A549 (cell line): ENCODE measurements at regions of chr2 and their contacts with region 1.

Region 1: DNA sequence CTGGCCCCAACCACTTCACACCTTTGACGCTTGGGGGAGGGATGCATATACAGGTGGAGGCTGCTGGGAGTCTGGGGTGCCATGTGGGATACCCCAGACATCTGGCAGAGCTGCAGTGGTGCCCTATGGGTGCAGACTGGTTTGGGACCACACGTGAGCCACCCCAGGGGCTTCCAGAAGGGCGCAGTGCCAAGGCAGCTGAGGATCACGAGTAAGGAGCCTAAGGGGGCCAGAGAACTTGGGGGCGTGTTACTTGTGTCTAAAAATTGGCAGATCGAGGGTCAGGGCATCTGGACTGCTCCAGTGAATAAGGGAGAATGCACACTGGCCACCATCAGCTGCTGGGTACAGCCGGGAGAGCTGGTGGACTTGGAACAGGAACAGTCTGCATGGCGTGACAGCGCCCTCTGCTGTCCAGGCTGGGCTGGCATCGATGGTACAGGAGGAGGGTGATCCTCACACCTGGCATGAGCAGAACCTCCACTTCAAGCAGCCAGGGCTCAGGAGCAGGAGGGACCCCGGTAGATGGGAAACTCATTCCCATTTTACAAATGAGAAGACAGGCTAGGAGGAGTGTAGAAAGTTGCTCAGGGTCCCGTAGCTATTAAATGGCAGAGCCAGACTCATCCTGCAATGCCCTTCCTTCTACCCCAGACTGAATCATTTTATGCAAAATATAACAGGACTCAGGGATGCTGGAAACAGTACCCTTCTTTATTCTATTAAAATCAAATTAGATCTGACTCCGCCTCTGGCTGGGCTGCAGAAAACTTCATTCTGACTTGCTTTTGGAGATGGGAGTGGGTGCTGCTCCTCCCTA is 60.4 kb downstream of the ATOH8 start:
- DNase-seq: peak; percentile 91 to 93
- ATAC-seq: peak; percentile 97 to 99
- H3K4me3 ChIP-seq: no peak overlapping the region
- H3K27ac ChIP-seq: peak overlapping the region; percentile 52 to 71
- H3K4me1 ChIP-seq: peaks cover 24% of the 10 kb centered on the region
- CTCF ChIP-seq: peak; percentile 98
- EP300 ChIP-seq: no peak
- POLR2A ChIP-seq: no peak
- RAD21 ChIP-seq: peak; percentile 100

Region 2: GRCh38 chr2:85468704-85469349 is 345.4 kb before region 1 on chr2:
- CTCF ChIA-PET with region 1: no interaction called
- POLR2A ChIA-PET with region 1: no interaction called
- DNase-seq: peak; percentile 69 to 82
- ATAC-seq: peak; percentile 82 to 83
- H3K4me3 ChIP-seq: no peak overlapping the region
- H3K27ac ChIP-seq: peak overlapping the region; percentile 81 to 86
- H3K4me1 ChIP-seq: peaks cover 66% of the 10 kb centered on the region
- CTCF ChIP-seq: no peak
- EP300 ChIP-seq: no peak
- POLR2A ChIP-seq: no peak
- RAD21 ChIP-seq: peak in 1 of 2 experiments; percentile 8; a peak in 2 of 5 replicates

Region 3: GRCh38 chr2:85635636-85636035 is 178.6 kb before region 1 on chr2:
- CTCF ChIA-PET with region 1: interaction called, 60 read pairs
- POLR2A ChIA-PET with region 1: no interaction called
- DNase-seq: no peak
- ATAC-seq: no peak
- H3K4me3 ChIP-seq: no peak overlapping the region
- H3K27ac ChIP-seq: no peak overlapping the region
- H3K4me1 ChIP-seq: peaks cover 3% of the 10 kb centered on the region; the same call in 1 of the 3 replicates
- CTCF ChIP-seq: no peak
- EP300 ChIP-seq: no peak
- POLR2A ChIP-seq: no peak
- RAD21 ChIP-seq: no peak

Region 4: DNA sequence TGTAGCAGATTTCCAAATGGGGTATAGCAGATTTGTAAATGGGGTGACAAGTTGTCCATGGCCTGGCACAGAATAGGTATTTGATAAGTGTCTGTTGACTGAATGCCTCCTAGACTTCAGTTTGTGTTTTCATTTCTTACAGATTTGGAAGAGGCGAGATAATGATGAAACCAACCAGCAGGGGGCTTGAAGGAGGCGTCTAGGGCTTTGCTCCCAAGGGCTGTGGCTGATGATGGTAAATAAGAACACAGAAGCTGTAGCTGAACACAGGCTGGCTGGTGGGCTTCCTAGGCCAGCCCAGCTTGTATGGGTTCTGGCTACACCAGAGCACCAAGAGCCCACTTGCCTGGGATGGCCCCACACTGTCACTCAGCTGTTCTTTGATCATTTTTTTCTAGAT is 165.6 kb before region 1 on chr2:
- CTCF ChIA-PET with region 1: interaction called, 54 read pairs
- POLR2A ChIA-PET with region 1: no interaction called
- DNase-seq: peak; percentile 72 to 76
- ATAC-seq: peak; percentile 72 to 84
- H3K4me3 ChIP-seq: no peak overlapping the region
- H3K27ac ChIP-seq: peak overlapping the region; percentile 80 to 91
- H3K4me1 ChIP-seq: peaks cover 59% of the 10 kb centered on the region
- CTCF ChIP-seq: peak; percentile 71
- EP300 ChIP-seq: no peak
- POLR2A ChIP-seq: no peak
- RAD21 ChIP-seq: peak; percentile 63 to 67

Region 5: DNA sequence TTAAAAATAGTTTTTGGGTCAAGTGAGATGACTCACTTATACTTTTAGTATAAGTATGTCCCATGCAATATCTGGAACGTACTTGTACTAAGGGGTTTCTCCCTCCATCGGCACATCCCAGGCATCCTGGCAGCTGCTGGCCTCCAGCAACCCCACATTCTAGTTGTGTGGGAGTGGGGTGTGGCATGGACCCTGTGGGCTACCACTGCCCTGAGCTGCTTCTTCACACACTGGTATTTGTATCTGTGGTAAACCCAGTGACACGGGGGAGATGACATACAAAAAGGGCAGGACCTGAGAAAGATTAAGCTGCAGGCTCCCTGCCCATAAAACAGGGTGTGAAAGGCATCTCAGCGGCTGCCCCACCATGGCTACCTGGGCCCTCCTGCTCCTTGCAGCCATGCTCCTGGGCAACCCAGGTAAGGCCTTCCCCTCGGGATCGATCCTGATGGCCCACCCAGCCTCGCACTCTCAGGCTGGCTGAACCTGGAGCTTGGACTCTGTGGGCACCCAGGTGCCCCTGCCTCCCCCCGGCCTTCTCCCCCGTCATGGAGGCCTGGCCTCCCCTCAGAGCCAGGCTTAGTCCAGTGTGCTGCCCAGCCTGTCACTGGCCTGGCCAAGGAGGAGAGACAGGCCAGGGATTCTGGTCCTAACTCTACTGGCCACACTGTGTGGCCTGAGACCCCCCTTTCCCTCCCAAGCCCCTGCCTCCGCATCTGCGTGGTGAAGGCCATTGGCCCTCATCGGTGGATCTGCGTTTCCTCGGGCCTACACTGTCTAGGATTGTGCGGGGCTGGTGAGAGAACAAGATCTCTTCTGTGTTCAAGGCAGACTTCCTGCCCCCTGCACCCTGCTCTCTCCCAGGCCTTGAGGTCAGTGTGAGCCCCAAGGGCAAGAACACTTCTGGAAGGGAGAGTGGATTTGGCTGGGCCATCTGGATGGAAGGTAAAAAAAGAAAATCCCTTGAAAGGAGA is 119.9 kb before region 1 on chr2 and contains the start of gene GNLY:
- CTCF ChIA-PET with region 1: interaction called, 18 read pairs
- POLR2A ChIA-PET with region 1: no interaction called
- DNase-seq: no peak
- ATAC-seq: no peak; a peak in 1 of 6 replicates
- H3K4me3 ChIP-seq: no peak within 1 kb of the TSS
- H3K27ac ChIP-seq: peak within 1 kb of the TSS in 1 of 2 experiments; percentile 47; a peak in 3 of 6 replicates
- H3K4me1 ChIP-seq: peaks cover 7% of the 10 kb centered on the region; the same call in 1 of the 3 replicates
- CTCF ChIP-seq: no peak
- EP300 ChIP-seq: no peak
- POLR2A ChIP-seq: no peak
- RAD21 ChIP-seq: no peak
- polyA plus RNA-seq, gene GNLY: not detected in 2 replicates

Region 6: DNA sequence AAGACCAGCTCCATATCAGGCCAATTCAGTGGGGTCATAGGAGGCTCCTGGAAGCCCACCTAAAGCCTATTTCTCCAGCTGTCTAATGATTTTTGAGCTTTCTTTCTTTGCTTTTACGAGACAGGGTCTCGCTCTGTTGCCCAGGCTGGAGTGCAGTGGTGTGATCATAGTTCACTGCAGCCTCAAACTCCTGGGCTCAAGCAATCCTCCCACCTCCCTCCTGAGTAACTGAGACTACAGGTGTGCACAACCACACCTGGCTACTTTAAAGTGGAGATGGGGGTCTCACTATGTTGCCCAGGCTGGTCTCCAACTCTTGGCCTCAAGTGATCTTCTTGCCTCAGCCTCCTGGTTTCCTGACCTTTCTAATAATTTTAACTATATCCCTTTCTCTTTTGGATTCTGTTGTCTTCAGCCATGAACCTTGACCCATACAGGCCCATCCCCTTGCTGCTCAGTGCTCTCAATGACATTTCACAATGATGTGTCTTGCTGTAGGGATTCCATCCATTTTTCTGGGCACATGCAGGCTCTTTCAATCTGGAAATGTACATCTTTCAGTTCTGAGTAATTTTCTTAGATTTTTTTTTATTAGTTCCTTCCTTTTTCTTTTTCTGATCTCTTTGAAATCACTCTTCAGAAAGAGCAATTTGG is 90.4 kb before region 1 on chr2:
- CTCF ChIA-PET with region 1: interaction called, 394 read pairs
- POLR2A ChIA-PET with region 1: no interaction called
- DNase-seq: no peak
- ATAC-seq: no peak
- H3K4me3 ChIP-seq: no peak overlapping the region
- H3K27ac ChIP-seq: no peak overlapping the region; a peak in 1 of 6 replicates
- H3K4me1 ChIP-seq: peaks cover 12% of the 10 kb centered on the region
- CTCF ChIP-seq: no peak
- EP300 ChIP-seq: no peak
- POLR2A ChIP-seq: no peak
- RAD21 ChIP-seq: no peak

Region 7: DNA sequence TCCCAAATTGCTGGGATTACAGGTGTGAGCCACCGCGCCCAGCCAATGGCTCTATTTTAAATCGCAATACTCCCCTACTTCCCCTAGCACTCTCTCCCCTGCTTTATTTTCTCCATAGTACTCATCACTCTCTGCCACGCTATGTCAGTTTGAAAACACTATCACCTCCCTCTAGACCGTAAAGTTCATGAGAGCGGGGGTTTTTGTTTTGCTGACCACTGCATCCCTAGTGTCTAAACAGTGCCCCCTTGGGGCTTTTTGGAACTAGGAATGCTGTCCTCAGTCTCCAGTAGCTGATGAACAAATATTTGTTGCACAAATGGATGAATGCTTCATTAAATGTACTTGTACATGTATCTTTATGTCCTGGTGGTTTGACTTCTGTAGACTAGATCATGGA is 16.3 kb before region 1 on chr2:
- CTCF ChIA-PET with region 1: interaction called, 1,675 read pairs
- POLR2A ChIA-PET with region 1: no interaction called
- DNase-seq: peak; percentile 26 to 43
- ATAC-seq: peak in 1 of 2 experiments; percentile 46; a peak in 2 of 6 replicates
- H3K4me3 ChIP-seq: no peak overlapping the region
- H3K27ac ChIP-seq: peak overlapping the region in 1 of 2 experiments; percentile 6; a peak in 2 of 6 replicates
- H3K4me1 ChIP-seq: peaks cover 43% of the 10 kb centered on the region
- CTCF ChIP-seq: peak; percentile 44
- EP300 ChIP-seq: no peak
- POLR2A ChIP-seq: no peak
- RAD21 ChIP-seq: peak; percentile 64 to 75